Endothelial cell of umbilical vein (primary cell): ENCODE measurements at regions of chr17 and their contacts with region 1.

Region 1: GRCh38 chr17:8041249-8041928 is 2.5 kb downstream of the ALOX15B start:
- DNase-seq: peak; percentile 66
- H3K4me3 ChIP-seq: no peak overlapping the region
- H3K27ac ChIP-seq: no peak overlapping the region
- H3K4me1 ChIP-seq: no peaks in the 10 kb centered on the region
- H3K27me3 ChIP-seq: peaks cover 9 to 14% of the 10 kb centered on the region in 2 experiments
- CTCF ChIP-seq: peak; percentile 39 to 48
- POLR2A ChIP-seq: no peak

Region 2: DNA sequence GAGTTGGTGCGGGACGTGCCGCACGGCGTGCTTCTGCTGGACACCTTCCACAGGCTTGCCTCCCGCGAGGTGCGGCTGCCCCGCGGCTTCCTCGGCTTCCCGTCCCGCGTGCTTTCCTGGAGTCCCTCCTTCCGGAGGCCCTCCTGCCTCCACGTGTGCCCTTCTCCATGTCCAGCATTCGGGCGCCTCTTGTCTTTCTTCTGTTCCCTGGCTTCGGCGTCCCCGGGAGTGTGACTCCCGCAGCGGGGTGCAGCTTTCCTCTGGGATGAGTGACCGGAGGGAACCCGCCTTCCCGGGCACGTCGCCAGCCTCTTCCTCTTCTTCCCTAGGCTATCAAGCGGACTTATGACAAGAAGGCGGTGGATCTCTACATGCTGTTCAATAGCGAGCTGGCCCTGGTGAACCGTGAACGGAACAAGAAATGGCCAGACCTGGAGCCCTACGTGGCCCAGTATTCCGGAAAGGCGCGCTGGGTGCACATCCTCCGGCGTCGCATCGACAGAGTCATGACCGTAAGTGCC is 300.8 kb before region 1 on chr17:
- CTCF ChIA-PET with region 1: interaction called, 48 read pairs
- POLR2A ChIA-PET with region 1: no interaction called
- dilution Hi-C with region 1: no loop called
- intact Hi-C with region 1: loop called (anchors 1 kb)
- DNase-seq: no peak
- H3K4me3 ChIP-seq: no peak overlapping the region
- H3K27ac ChIP-seq: no peak overlapping the region
- H3K4me1 ChIP-seq: peaks cover 7% of the 10 kb centered on the region
- H3K27me3 ChIP-seq: peaks cover 6 to 7% of the 10 kb centered on the region in 2 experiments
- CTCF ChIP-seq: no peak
- POLR2A ChIP-seq: no peak

Region 3: GRCh38 chr17:7825206-7825990 is 216.0 kb before region 1 on chr17:
- CTCF ChIA-PET with region 1: interaction called, 20 read pairs
- POLR2A ChIA-PET with region 1: no interaction called
- dilution Hi-C with region 1: no loop called
- intact Hi-C with region 1: no loop called
- DNase-seq: no peak
- H3K4me3 ChIP-seq: no peak overlapping the region
- H3K27ac ChIP-seq: no peak overlapping the region
- H3K4me1 ChIP-seq: no peaks in the 10 kb centered on the region
- H3K27me3 ChIP-seq: peaks cover 0 to 6% of the 10 kb centered on the region in 2 experiments
- CTCF ChIP-seq: peak in 1 of 2 donors; percentile 4
- POLR2A ChIP-seq: no peak

Region 4: GRCh38 chr17:7931709-7932482 is 109.5 kb before region 1 on chr17 and contains the starts of genes CNTROB and TRAPPC1:
- CTCF ChIA-PET with region 1: interaction called, 11 read pairs
- POLR2A ChIA-PET with region 1: no interaction called
- dilution Hi-C with region 1: no loop called
- intact Hi-C with region 1: no loop called
- DNase-seq: peak; percentile 99
- H3K4me3 ChIP-seq: peak within 1 kb of the TSS; percentile 74 to 98 (median 96)
- H3K27ac ChIP-seq: peak within 1 kb of the TSS; percentile 66
- H3K4me1 ChIP-seq: peaks cover 23% of the 10 kb centered on the region
- H3K27me3 ChIP-seq: no peaks in the 10 kb centered on the region
- CTCF ChIP-seq: no peak
- POLR2A ChIP-seq: no peak
- total RNA-seq, gene CNTROB: 45.0 and 47.2 TPM in 2 replicates
- total RNA-seq, gene TRAPPC1: 139 and 146 TPM in 2 replicates

Region 5: GRCh38 chr17:7997186-7997585 is 44.2 kb before region 1 on chr17:
- CTCF ChIA-PET with region 1: interaction called, 15 read pairs
- POLR2A ChIA-PET with region 1: no interaction called
- dilution Hi-C with region 1: no loop called
- intact Hi-C with region 1: no loop called
- DNase-seq: peak; percentile 36
- H3K4me3 ChIP-seq: no peak overlapping the region
- H3K27ac ChIP-seq: no peak overlapping the region
- H3K4me1 ChIP-seq: no peaks in the 10 kb centered on the region
- H3K27me3 ChIP-seq: peaks cover 26 to 39% of the 10 kb centered on the region in 2 experiments
- CTCF ChIP-seq: peak; percentile 13 to 21
- POLR2A ChIP-seq: no peak

Region 6: GRCh38 chr17:8031261-8031661 is 10.1 kb before region 1 on chr17:
- CTCF ChIA-PET with region 1: interaction called, 12 read pairs
- POLR2A ChIA-PET with region 1: no interaction called
- dilution Hi-C with region 1: no loop called
- intact Hi-C with region 1: no loop called
- DNase-seq: no peak
- H3K4me3 ChIP-seq: no peak overlapping the region
- H3K27ac ChIP-seq: no peak overlapping the region
- H3K4me1 ChIP-seq: no peaks in the 10 kb centered on the region
- H3K27me3 ChIP-seq: peaks cover 11 to 15% of the 10 kb centered on the region in 2 experiments
- CTCF ChIP-seq: no peak
- POLR2A ChIP-seq: no peak

Region 7: DNA sequence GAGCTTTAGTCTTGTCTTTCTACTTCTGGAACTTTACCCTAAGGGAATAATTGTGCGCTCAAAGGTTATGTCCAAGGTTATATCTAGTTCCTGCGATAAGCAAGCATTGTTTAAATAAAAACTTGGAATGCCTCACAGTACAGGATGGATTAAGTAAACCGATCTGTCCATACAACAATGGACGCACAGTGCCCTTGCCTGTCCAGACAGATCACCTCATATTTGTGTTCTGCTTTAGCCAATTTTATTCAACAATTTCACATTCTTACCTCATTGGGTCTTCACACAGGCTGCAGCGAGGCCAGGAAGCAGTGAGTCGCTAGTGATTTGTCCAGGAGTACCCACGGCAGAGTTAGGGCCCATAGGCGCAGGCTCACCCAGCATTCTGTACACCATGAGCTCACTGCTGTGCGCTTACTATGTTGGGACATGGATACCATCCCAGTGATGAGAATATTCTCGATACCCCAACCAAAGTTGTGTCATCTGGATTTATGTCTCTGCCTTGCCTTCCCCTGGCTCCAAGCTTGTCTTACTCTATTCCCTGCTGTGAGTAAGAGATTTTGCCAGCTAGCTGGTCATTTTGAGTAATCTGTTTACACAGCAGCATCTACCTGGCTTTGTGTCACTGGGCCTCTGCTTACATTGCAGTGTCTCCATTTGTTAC is 1643.7 kb after region 1 on chr17:
- CTCF ChIA-PET with region 1: no interaction called
- POLR2A ChIA-PET with region 1: no interaction called
- dilution Hi-C with region 1: no loop called
- intact Hi-C with region 1: no loop called
- DNase-seq: no peak
- H3K4me3 ChIP-seq: no peak overlapping the region
- H3K27ac ChIP-seq: no peak overlapping the region
- H3K4me1 ChIP-seq: no peaks in the 10 kb centered on the region
- H3K27me3 ChIP-seq: no peaks in the 10 kb centered on the region
- CTCF ChIP-seq: no peak
- POLR2A ChIP-seq: no peak